Lower leg skin (tissue), 4 donors: ENCODE measurements at regions of chr4 and their contacts with region 1.

Region 1: GRCh38 chr4:90274175-90274574 is 147.0 kb downstream of the CCSER1 start:
- DNase-seq: no peak
- H3K4me3 ChIP-seq: no peak overlapping the region
- CTCF ChIP-seq: no peak
- POLR2A ChIP-seq: no peak

Region 2: GRCh38 chr4:90246816-90247215 is 27.4 kb before region 1 on chr4:
- intact Hi-C with region 1: loop called (anchors 1 kb)
- DNase-seq: no peak
- H3K4me3 ChIP-seq: no peak overlapping the region
- CTCF ChIP-seq: no peak
- POLR2A ChIP-seq: no peak